ENCODE measurements at regions of chr3 and their contacts with region 1.

Region 1: DNA sequence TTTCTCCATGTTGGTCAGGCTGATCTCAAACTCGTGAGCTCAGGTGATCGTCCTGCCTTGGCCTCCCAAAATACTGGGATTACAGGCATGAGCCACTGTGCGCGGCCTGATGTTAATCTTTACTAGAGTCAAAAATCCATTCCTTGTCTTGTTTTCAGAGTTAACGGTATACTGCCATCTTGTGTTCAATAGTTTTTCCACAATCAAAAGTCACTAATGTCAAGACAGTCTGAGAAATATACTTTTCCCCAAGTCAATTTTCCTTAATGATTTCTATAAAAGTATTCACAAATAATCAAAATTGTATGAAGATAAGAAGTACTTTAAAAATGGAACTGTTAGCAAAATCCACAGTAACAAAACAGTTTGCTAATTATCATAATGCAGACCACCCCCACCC is 8.5 kb downstream of the CRBN start:
- DNase-seq: peak; percentile 17
- H3K4me3 Mint-ChIP-seq: no peak overlapping the region
- H3K27ac Mint-ChIP-seq: no peak overlapping the region
- H3K4me1 Mint-ChIP-seq: no peaks in the 10 kb centered on the region
- H3K27me3 Mint-ChIP-seq: no peaks in the 10 kb centered on the region
- CTCF ChIP-seq: peak; percentile 27

Region 2: GRCh38 chr3:3053974-3054373 is 117.0 kb before region 1 on chr3:
- CTCF ChIA-PET with region 1: no interaction called
- POLR2A ChIA-PET with region 1: no interaction called
- intact Hi-C with region 1: no loop called
- DNase-seq: no peak
- H3K4me3 Mint-ChIP-seq: no peak overlapping the region
- H3K27ac Mint-ChIP-seq: no peak overlapping the region
- H3K4me1 Mint-ChIP-seq: no peaks in the 10 kb centered on the region
- H3K27me3 Mint-ChIP-seq: peaks cover 90% of the 10 kb centered on the region
- CTCF ChIP-seq: no peak

Region 3: DNA sequence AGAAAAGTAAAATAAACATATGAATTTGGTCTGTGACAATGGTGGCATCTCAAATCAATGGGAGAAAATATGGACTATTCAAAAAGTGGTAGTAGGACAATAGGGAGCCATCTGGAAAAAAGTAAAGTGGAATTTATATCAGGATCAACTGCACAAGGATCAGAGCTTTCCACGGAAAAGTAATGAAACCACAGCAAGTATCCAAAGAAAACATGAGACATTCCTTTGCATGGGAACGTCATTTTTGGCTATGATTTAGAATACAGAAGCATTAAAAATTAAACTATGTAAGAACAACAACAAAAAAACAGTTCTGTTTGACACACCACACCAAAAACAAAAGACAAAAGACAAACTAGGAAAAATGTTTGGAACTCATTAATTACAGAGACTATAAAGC is 10.2 kb before region 1 on chr3:
- CTCF ChIA-PET with region 1: interaction called, 14 read pairs
- POLR2A ChIA-PET with region 1: no interaction called
- intact Hi-C with region 1: no loop called
- DNase-seq: no peak
- H3K4me3 Mint-ChIP-seq: no peak overlapping the region
- H3K27ac Mint-ChIP-seq: no peak overlapping the region
- H3K4me1 Mint-ChIP-seq: no peaks in the 10 kb centered on the region
- H3K27me3 Mint-ChIP-seq: no peaks in the 10 kb centered on the region
- CTCF ChIP-seq: no peak

Region 4: DNA sequence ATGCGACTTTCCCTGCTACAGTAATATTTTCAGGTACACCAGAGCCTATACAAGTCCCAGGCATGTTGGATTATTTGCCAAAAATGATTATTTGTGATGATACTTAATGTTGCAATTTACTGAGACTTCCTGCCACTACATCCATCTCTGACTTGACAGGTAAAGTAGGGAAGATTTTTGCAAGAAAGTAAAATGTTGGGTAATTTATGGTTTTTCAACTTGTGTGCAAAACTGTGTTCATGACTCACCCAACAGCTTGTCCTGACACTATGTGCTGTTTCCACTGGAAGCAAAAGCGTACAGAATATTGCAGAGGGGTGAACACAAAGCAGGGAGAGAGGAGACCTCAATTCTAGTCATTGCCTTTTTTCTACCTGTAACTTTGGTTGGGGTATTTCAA is 13.9 kb after region 1 on chr3:
- CTCF ChIA-PET with region 1: no interaction called
- POLR2A ChIA-PET with region 1: no interaction called
- intact Hi-C with region 1: no loop called
- DNase-seq: peak; percentile 20
- H3K4me3 Mint-ChIP-seq: no peak overlapping the region
- H3K27ac Mint-ChIP-seq: no peak overlapping the region
- H3K4me1 Mint-ChIP-seq: no peaks in the 10 kb centered on the region
- H3K27me3 Mint-ChIP-seq: peaks cover 8% of the 10 kb centered on the region
- CTCF ChIP-seq: no peak

Region 5: DNA sequence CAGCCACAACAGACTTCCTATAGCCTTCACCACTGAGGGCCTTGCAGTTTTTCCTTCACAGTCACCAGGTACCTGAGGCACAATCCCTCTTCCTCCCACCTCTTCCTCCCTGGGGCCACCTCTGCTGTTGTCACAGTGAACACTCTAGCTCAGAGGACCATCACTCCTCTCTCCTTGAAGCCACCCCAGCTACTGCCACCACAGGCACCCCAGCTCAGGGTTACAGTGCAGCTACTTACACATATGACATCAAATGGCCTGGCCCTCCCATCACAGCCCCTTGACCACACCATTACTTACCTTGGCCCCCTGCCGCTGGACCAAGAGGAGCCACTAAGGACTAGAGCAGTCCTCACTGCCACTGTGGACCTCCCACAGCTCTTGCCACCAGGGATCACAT is 221.9 kb after region 1 on chr3:
- CTCF ChIA-PET with region 1: no interaction called
- POLR2A ChIA-PET with region 1: no interaction called
- intact Hi-C with region 1: no loop called
- DNase-seq: no peak
- H3K4me3 Mint-ChIP-seq: no peak overlapping the region
- H3K27ac Mint-ChIP-seq: no peak overlapping the region
- H3K4me1 Mint-ChIP-seq: no peaks in the 10 kb centered on the region
- H3K27me3 Mint-ChIP-seq: no peaks in the 10 kb centered on the region
- CTCF ChIP-seq: no peak